Left ventricle myocardium superior (tissue), 1 donor: ENCODE measurements at regions of chr13 and their contacts with region 1.

Region 1: DNA sequence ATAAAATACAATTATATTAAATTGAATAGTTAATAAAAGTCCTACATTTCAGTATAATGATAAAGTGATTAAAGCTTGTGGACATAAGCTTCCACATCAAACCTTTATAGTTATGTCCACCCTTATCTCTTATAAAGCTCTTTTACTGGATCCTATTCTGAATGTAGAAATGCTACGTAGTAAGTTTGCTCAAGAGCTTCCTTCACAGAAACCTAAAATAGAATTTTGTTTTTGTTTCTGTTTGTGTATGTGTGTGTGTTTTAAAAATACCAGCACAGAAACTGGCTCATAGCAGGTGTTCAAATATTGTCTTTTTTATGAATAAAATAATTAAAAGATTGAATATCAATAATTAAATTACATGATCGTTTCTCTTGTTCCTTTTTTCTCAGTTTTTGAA is 21.0 kb upstream of the UFM1 start:
- DNase-seq: no peak
- ATAC-seq: no peak

Region 2: DNA sequence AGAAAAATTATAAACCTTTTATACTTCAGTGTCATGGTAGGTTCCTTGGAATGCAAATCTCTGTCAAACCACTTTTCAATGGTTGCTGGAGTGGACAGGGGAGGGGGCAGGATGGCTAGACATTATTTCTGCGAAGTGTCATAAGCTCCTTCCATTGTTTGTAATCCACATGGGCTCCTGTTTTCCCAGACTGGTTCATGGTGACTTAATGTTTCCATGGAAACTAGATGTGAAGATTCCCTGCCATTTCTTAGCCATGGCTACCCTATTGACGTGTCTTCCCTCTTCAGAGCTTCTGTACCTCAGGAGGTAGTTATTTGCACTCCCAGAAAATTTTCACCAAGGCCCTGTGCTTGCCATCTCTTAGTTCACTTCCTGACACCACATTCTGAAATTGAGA is 116.2 kb after region 1 on chr13:
- intact Hi-C with region 1: loop called (anchors 5 kb)
- DNase-seq: no peak
- ATAC-seq: no peak

Region 3: DNA sequence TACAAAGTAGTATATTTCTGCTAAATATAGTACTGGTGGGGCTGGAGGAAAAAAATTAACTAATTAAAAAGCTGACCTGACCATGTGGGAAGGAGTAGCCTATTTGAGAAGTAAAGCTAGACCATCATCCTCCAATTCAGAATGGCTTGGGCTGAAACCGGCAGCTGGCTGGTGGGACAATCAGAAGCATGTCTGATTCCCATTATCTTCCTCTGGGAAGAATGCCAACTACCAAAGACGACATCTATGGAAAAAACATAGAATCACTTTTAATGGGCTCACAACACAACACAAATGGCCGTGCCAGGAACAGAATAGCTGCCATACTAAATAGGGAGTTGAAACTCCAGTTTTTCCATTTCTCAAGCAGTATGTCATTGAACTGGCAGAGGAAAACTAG is 237.8 kb after region 1 on chr13:
- intact Hi-C with region 1: no loop called
- DNase-seq: no peak
- ATAC-seq: no peak